Right ventricle myocardium superior (tissue), 1 donor: ENCODE measurements at regions of chr1 and their contacts with region 1.

Region 1: GRCh38 chr1:178282949-178283367 is 189.1 kb downstream of the RASAL2 start:
- DNase-seq: no peak
- ATAC-seq: peak; percentile 33

Region 2: GRCh38 chr1:178031856-178032320 is 251.1 kb before region 1 on chr1:
- intact Hi-C with region 1: loop called (anchors 10 kb)
- DNase-seq: peak; percentile 87
- ATAC-seq: peak; percentile 70